Breast epithelium (tissue), 4 donors: ENCODE measurements at regions of chr7 and their contacts with region 1.

Region 1: GRCh38 chr7:94154858-94155257 is 150.7 kb upstream of the BET1 start:
- DNase-seq: no peak
- H3K4me3 ChIP-seq: no peak overlapping the region
- H3K27ac ChIP-seq: no peak overlapping the region
- H3K4me1 ChIP-seq: no peaks in the 10 kb centered on the region
- H3K27me3 ChIP-seq: no peaks in the 10 kb centered on the region
- CTCF ChIP-seq: no peak
- POLR2A ChIP-seq: no peak

Region 2: GRCh38 chr7:95324431-95324830 is 1169.6 kb after region 1 on chr7 and contains the start of gene PON1:
- intact Hi-C with region 1: loop called (anchors 5 kb)
- DNase-seq: no peak
- H3K4me3 ChIP-seq: peak within 1 kb of the TSS in 1 of 3 donors; percentile 21
- H3K27ac ChIP-seq: no peak within 1 kb of the TSS
- H3K4me1 ChIP-seq: no peaks in the 10 kb centered on the region
- H3K27me3 ChIP-seq: peaks cover 0 to 6% of the 10 kb centered on the region in 2 donors
- CTCF ChIP-seq: no peak
- POLR2A ChIP-seq: no peak
- total RNA-seq, gene PON1: 0.29 to 0.66 TPM in 2 of 3 donors, not detected in the other